Naive thymus-derived CD4-positive, alpha-beta T cell (primary cell): ENCODE measurements at regions of chr5 and their contacts with region 1.

Region 1: GRCh38 chr5:118987988-118988865 is at the start of gene DTWD2:
- DNase-seq: peak; percentile 84 to 98 (median 95)
- ATAC-seq: peak; percentile 95
- H3K4me3 ChIP-seq: peak within 1 kb of the TSS; percentile 59
- H3K4me3 Mint-ChIP-seq: peak within 1 kb of the TSS; percentile 78 to 87 (median 84)
- H3K27ac ChIP-seq: peak within 1 kb of the TSS; percentile 74
- H3K27ac Mint-ChIP-seq: peak within 1 kb of the TSS in 8 of 9 donors; percentile 19 to 84 (median 79)
- H3K4me1 ChIP-seq: peaks cover 6 to 8% of the 10 kb centered on the region in 2 donors
- H3K4me1 Mint-ChIP-seq: peaks cover 14 to 39% (median 28%) of the 10 kb centered on the region in 7 donors
- H3K27me3 ChIP-seq: no peaks in the 10 kb centered on the region
- H3K27me3 Mint-ChIP-seq: peaks cover 0 to 2% (median 0%) of the 10 kb centered on the region in 5 donors
- total RNA-seq, gene DTWD2: 2.6 to 5.8 (median 3.4) TPM

Region 2: GRCh38 chr5:118314931-118315330 is 673.3 kb before region 1 on chr5:
- CTCF ChIA-PET with region 1: no interaction called
- POLR2A ChIA-PET with region 1: no interaction called
- intact Hi-C with region 1: no loop called
- DNase-seq: no peak
- ATAC-seq: no peak
- H3K4me3 ChIP-seq: no peak overlapping the region
- H3K4me3 Mint-ChIP-seq: no peak overlapping the region
- H3K27ac ChIP-seq: no peak overlapping the region
- H3K27ac Mint-ChIP-seq: no peak overlapping the region
- H3K4me1 ChIP-seq: no peaks in the 10 kb centered on the region
- H3K4me1 Mint-ChIP-seq: no peaks in the 10 kb centered on the region
- H3K27me3 ChIP-seq: no peaks in the 10 kb centered on the region
- H3K27me3 Mint-ChIP-seq: no peaks in the 10 kb centered on the region

Region 3: GRCh38 chr5:119022017-119022745 is 34.0 kb after region 1 on chr5:
- CTCF ChIA-PET with region 1: no interaction called
- POLR2A ChIA-PET with region 1: no interaction called
- intact Hi-C with region 1: loop called in 1 of 2 experiments (anchors 1 kb)
- DNase-seq: peak in 6 of 9 donors; percentile 12 to 60 (median 54)
- ATAC-seq: peak; percentile 67
- H3K4me3 ChIP-seq: no peak overlapping the region
- H3K4me3 Mint-ChIP-seq: no peak overlapping the region
- H3K27ac ChIP-seq: no peak overlapping the region
- H3K27ac Mint-ChIP-seq: peak overlapping the region in 3 of 9 donors; percentile 46 to 60 (median 47)
- H3K4me1 ChIP-seq: no peaks in the 10 kb centered on the region
- H3K4me1 Mint-ChIP-seq: peaks cover 0 to 6% (median 2%) of the 10 kb centered on the region in 7 donors
- H3K27me3 ChIP-seq: no peaks in the 10 kb centered on the region
- H3K27me3 Mint-ChIP-seq: no peaks in the 10 kb centered on the region

Region 4: DNA sequence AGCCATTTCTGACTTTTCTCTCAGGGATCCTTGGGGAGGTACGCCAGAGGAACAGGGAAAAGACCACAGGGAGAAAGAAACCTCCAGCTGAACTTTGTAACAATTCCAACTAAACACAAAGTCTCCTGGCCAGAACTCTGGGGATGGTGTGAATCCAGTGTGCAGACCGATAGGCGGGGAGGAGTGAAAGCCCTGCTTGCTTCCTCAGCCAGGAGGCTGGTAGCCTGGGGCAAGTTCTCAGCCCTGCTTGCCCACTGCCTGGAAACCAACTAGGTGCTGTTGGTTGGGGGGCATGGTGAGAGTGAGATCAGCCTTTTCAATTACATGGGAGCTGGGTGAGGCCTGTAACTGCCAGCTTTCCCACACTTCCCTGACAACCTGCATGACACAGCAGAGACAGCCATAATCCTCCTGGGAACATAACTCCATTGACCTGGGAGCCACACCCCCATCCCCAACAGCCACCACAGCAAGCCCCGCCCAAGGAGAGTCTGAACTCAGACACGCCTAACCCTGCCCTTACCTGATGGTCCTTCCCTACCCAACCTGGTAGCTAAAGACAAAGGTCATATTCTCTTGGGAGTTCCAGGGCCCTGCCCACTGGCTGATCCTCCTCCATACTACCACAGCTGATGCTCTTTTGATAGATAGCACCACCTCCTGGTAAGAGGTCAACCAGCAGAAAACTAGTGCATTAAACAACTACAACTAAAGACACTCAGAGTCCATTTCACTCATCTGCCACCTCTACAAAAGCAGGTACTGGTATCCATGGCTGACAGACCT is 267.5 kb after region 1 on chr5:
- CTCF ChIA-PET with region 1: no interaction called
- POLR2A ChIA-PET with region 1: no interaction called
- intact Hi-C with region 1: loop called in 1 of 2 experiments (anchors 1 kb)
- DNase-seq: no peak
- ATAC-seq: peak; percentile 59
- H3K4me3 ChIP-seq: no peak overlapping the region
- H3K4me3 Mint-ChIP-seq: no peak overlapping the region
- H3K27ac ChIP-seq: no peak overlapping the region
- H3K27ac Mint-ChIP-seq: no peak overlapping the region
- H3K4me1 ChIP-seq: no peaks in the 10 kb centered on the region
- H3K4me1 Mint-ChIP-seq: peaks cover 0 to 5% (median 1%) of the 10 kb centered on the region in 7 donors
- H3K27me3 ChIP-seq: no peaks in the 10 kb centered on the region
- H3K27me3 Mint-ChIP-seq: no peaks in the 10 kb centered on the region

Region 5: GRCh38 chr5:119328753-119329602 is 340.8 kb after region 1 on chr5:
- CTCF ChIA-PET with region 1: interaction called, 3 read pairs
- POLR2A ChIA-PET with region 1: interaction called, 3 read pairs
- intact Hi-C with region 1: loop called in 1 of 2 experiments (anchors 5 kb)
- DNase-seq: peak in 4 of 9 donors; percentile 30 to 71 (median 37)
- ATAC-seq: peak; percentile 59
- H3K4me3 ChIP-seq: peak overlapping the region; percentile 40
- H3K4me3 Mint-ChIP-seq: peak overlapping the region; percentile 73 to 97 (median 81)
- H3K27ac ChIP-seq: peak overlapping the region; percentile 78
- H3K27ac Mint-ChIP-seq: peak overlapping the region; percentile 84 to 99 (median 95)
- H3K4me1 ChIP-seq: peaks cover 72 to 86% of the 10 kb centered on the region in 2 donors
- H3K4me1 Mint-ChIP-seq: peaks cover 63 to 98% (median 90%) of the 10 kb centered on the region in 7 donors
- H3K27me3 ChIP-seq: no peaks in the 10 kb centered on the region
- H3K27me3 Mint-ChIP-seq: no peaks in the 10 kb centered on the region

Region 6: GRCh38 chr5:119435436-119436132 is 447.4 kb after region 1 on chr5:
- CTCF ChIA-PET with region 1: interaction called, 38 read pairs
- POLR2A ChIA-PET with region 1: no interaction called
- intact Hi-C with region 1: loop called (anchors 1 kb)
- DNase-seq: peak; percentile 49 to 75 (median 64)
- ATAC-seq: peak; percentile 89
- H3K4me3 ChIP-seq: no peak overlapping the region
- H3K4me3 Mint-ChIP-seq: peak overlapping the region in 2 of 10 donors; percentile 9 to 32
- H3K27ac ChIP-seq: no peak overlapping the region
- H3K27ac Mint-ChIP-seq: no peak overlapping the region
- H3K4me1 ChIP-seq: no peaks in the 10 kb centered on the region
- H3K4me1 Mint-ChIP-seq: peaks cover 0 to 25% (median 16%) of the 10 kb centered on the region in 7 donors
- H3K27me3 ChIP-seq: no peaks in the 10 kb centered on the region
- H3K27me3 Mint-ChIP-seq: peaks cover 7 to 30% (median 8%) of the 10 kb centered on the region in 5 donors

Region 7: DNA sequence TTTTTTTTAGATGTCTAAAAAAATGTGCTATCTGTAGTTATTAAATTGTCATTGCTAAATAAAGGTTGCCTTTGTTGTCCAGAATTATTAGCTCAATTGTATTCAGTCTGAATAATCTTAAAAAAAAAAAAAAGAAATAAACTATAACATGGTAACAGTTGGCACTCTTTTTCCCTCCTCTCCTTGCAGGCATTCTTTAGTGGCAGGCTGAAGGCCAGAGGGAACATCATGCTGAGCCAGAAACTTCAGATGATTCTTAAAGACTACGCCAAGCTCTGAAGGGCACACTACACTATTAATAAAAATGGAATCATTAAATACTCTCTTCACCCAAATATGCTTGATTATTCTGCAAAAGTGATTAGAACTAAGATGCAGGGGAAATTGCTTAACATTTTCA is 553.5 kb after region 1 on chr5:
- CTCF ChIA-PET with region 1: no interaction called
- POLR2A ChIA-PET with region 1: no interaction called
- intact Hi-C with region 1: no loop called
- DNase-seq: no peak
- ATAC-seq: no peak
- H3K4me3 ChIP-seq: no peak overlapping the region
- H3K4me3 Mint-ChIP-seq: no peak overlapping the region
- H3K27ac ChIP-seq: no peak overlapping the region
- H3K27ac Mint-ChIP-seq: peak overlapping the region in 2 of 9 donors; percentile 12 to 19
- H3K4me1 ChIP-seq: no peaks in the 10 kb centered on the region
- H3K4me1 Mint-ChIP-seq: no peaks in the 10 kb centered on the region
- H3K27me3 ChIP-seq: no peaks in the 10 kb centered on the region
- H3K27me3 Mint-ChIP-seq: no peaks in the 10 kb centered on the region

Region 8: GRCh38 chr5:119597728-119598298 is 609.6 kb after region 1 on chr5:
- CTCF ChIA-PET with region 1: no interaction called
- POLR2A ChIA-PET with region 1: no interaction called
- intact Hi-C with region 1: no loop called
- DNase-seq: no peak
- ATAC-seq: no peak
- H3K4me3 ChIP-seq: no peak overlapping the region
- H3K4me3 Mint-ChIP-seq: no peak overlapping the region
- H3K27ac ChIP-seq: no peak overlapping the region
- H3K27ac Mint-ChIP-seq: no peak overlapping the region
- H3K4me1 ChIP-seq: no peaks in the 10 kb centered on the region
- H3K4me1 Mint-ChIP-seq: no peaks in the 10 kb centered on the region
- H3K27me3 ChIP-seq: no peaks in the 10 kb centered on the region
- H3K27me3 Mint-ChIP-seq: peaks cover 0 to 3% (median 0%) of the 10 kb centered on the region in 5 donors

Region 9: GRCh38 chr5:119743927-119744326 is 755.7 kb after region 1 on chr5:
- CTCF ChIA-PET with region 1: no interaction called
- POLR2A ChIA-PET with region 1: no interaction called
- intact Hi-C with region 1: loop called (anchors 1 kb)
- DNase-seq: peak in 3 of 9 donors; percentile 2 to 25 (median 12)
- ATAC-seq: no peak
- H3K4me3 ChIP-seq: no peak overlapping the region
- H3K4me3 Mint-ChIP-seq: no peak overlapping the region
- H3K27ac ChIP-seq: no peak overlapping the region
- H3K27ac Mint-ChIP-seq: no peak overlapping the region
- H3K4me1 ChIP-seq: no peaks in the 10 kb centered on the region
- H3K4me1 Mint-ChIP-seq: no peaks in the 10 kb centered on the region
- H3K27me3 ChIP-seq: no peaks in the 10 kb centered on the region
- H3K27me3 Mint-ChIP-seq: peaks cover 0 to 12% (median 5%) of the 10 kb centered on the region in 5 donors